HCT116 (cell line): ENCODE measurements at regions of chr2 and their contacts with region 1.

Region 1: GRCh38 chr2:168336864-168337263 is 89.5 kb upstream of the STK39 start:
- DNase-seq: peak; percentile 87
- ATAC-seq: peak; percentile 100
- H3K4me3 ChIP-seq: peak overlapping the region in 1 of 2 experiments; percentile 0; a peak in 1 of 4 replicates
- H3K27ac ChIP-seq: no peak overlapping the region
- H3K4me1 ChIP-seq: peaks cover 0 to 17% of the 10 kb centered on the region in 2 experiments; a peak in 2 of 4 replicates
- H3K27me3 ChIP-seq: no peaks in the 10 kb centered on the region
- CTCF ChIP-seq: peak; percentile 74 to 83 (median 78); a peak in 5 of 6 replicates
- POLR2A ChIP-seq: no peak
- RAD21 ChIP-seq: peak; percentile 91

Region 2: DNA sequence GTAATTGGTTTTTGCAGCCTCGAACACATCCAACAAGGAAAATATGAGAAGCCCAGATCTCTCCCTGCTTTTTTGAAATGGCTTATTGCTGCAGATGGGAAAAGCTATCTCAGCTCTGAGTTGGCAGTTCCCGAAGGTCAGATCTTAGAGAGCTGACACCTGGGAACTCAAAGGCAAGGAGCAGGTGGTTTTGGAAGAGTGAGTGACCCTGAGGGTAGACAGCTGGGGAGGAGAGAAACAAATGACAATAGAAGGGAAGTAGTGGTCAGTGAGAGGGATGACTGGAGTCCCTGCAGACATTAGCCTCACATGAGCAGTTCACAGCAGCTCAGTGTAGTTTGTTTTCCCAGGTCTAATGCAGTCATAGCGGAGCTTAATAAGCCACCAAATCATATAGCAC is 407.4 kb before region 1 on chr2:
- CTCF ChIA-PET with region 1: no interaction called
- POLR2A ChIA-PET with region 1: no interaction called
- RAD21 ChIA-PET with region 1: no interaction called
- intact Hi-C with region 1: no loop called
- DNase-seq: no peak
- ATAC-seq: no peak
- H3K4me3 ChIP-seq: no peak overlapping the region
- H3K27ac ChIP-seq: no peak overlapping the region
- H3K4me1 ChIP-seq: no peaks in the 10 kb centered on the region
- H3K27me3 ChIP-seq: peaks cover 38% of the 10 kb centered on the region; the same call in 1 of the 2 replicates
- CTCF ChIP-seq: no peak
- POLR2A ChIP-seq: no peak
- RAD21 ChIP-seq: no peak

Region 3: GRCh38 chr2:168136392-168136977 is 200.4 kb before region 1 on chr2:
- CTCF ChIA-PET with region 1: interaction called, 6 read pairs
- POLR2A ChIA-PET with region 1: no interaction called
- RAD21 ChIA-PET with region 1: no interaction called
- intact Hi-C with region 1: loop called (anchors 2 kb)
- DNase-seq: peak; percentile 46
- ATAC-seq: peak; percentile 72
- H3K4me3 ChIP-seq: no peak overlapping the region
- H3K27ac ChIP-seq: peak overlapping the region; percentile 1; the same call in 1 of the 2 replicates
- H3K4me1 ChIP-seq: peaks cover 4 to 28% of the 10 kb centered on the region in 2 experiments
- H3K27me3 ChIP-seq: no peaks in the 10 kb centered on the region
- CTCF ChIP-seq: peak; percentile 37 to 61 (median 47); a peak in 5 of 6 replicates
- POLR2A ChIP-seq: no peak
- RAD21 ChIP-seq: peak; percentile 66

Region 4: DNA sequence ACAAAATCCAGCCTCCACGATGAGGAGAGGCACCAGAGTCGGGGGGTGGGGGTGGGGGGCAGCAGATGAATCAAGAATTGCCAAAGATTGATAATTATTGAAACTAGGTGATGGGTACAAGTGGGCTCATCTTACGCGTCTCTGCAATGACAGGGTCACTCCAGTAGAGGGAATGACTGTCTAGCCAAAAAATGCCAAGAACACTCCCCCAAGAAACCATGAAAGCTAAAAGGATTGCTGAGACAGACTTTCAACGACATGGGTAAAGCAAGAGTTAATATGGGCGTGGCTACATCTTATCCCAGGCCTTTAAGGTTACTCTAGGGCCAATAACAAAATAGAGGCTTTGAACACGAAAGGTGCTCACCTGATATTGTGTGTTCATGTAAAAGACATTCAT is 176.0 kb before region 1 on chr2:
- CTCF ChIA-PET with region 1: interaction called, 10 read pairs
- POLR2A ChIA-PET with region 1: no interaction called
- RAD21 ChIA-PET with region 1: no interaction called
- intact Hi-C with region 1: loop called (anchors 5 kb)
- DNase-seq: peak; percentile 69
- ATAC-seq: peak; percentile 75
- H3K4me3 ChIP-seq: no peak overlapping the region
- H3K27ac ChIP-seq: no peak overlapping the region
- H3K4me1 ChIP-seq: peaks cover 41 to 92% of the 10 kb centered on the region in 2 experiments
- H3K27me3 ChIP-seq: no peaks in the 10 kb centered on the region
- CTCF ChIP-seq: peak; percentile 30 to 60 (median 57); a peak in 5 of 6 replicates
- POLR2A ChIP-seq: no peak
- RAD21 ChIP-seq: peak; percentile 72

Region 5: DNA sequence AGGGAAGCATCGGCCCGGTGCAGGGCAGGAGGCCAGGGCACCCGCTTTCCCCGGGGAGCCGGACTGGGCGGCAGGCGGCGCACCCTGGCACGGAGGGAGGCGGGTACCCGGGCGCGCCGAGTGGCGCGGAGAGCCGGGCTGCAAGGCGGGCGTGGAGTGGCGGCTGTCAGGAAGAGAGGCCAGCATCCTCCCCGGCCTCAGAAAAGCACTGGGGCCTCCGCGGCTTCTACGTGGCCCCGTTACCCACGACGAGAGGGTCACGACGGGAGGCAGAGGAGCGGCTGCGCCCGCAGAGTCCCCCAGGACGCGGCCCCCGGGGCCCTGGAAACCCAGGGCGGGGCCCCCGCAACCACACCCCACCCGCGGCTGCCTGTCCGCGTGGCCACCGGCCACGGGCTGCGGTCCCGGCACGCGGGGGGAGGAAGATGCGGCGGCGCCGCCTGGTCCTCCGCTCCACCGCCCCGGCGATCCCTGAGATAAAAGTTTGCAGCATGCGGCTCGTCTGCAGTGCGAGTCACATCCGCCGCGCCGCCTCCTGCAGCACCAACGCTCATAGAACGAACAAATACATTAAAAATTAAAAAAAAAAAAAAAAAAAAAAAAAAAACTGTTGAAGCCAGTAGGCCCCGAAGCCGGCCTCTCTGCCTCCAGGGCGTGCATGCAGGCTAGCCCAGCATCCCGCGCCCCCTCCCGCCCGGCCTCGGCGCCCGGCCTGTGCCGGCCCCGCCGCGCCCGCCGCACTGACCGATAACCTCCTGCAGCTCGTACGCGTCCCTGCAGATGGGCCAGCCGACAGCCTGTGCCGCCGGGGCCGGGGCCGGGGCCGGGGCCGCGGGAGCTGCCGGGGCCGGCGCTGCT is 90.2 kb before region 1 on chr2:
- CTCF ChIA-PET with region 1: no interaction called
- POLR2A ChIA-PET with region 1: no interaction called
- RAD21 ChIA-PET with region 1: no interaction called
- intact Hi-C with region 1: loop called (anchors 2 kb)
- DNase-seq: no peak
- ATAC-seq: peak; percentile 54
- H3K4me3 ChIP-seq: peak overlapping the region; percentile 56 to 75
- H3K27ac ChIP-seq: peak overlapping the region; percentile 95
- H3K4me1 ChIP-seq: peaks cover 39 to 57% of the 10 kb centered on the region in 2 experiments
- H3K27me3 ChIP-seq: no peaks in the 10 kb centered on the region
- CTCF ChIP-seq: peak in 2 of 3 experiments; percentile 19 to 44; a peak in 4 of 6 replicates
- POLR2A ChIP-seq: no peak
- RAD21 ChIP-seq: no peak